ENCODE measurements at regions of chr10 and their contacts with region 1.

Region 1: DNA sequence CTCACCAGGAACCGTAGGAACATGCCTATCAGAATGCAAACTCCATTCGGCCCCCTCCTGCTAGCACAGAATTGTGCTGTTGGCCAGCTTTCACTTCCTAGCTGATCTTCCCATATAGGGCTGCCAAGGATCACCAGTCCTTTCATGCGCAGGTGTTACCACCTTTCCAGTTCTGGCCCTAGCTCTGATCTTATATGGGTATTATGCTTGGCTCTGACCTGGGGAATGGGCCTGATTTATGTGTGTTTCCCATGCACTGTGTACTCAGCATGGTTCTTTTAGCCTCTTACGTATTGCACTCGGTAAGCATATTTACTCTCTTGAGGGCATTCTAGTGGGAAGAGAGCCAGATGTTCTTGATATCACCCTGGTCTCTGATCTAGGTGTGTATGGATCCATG is 11.1 kb downstream of the SLC35G1 start:
- DNase-seq: no peak
- H3K4me3 ChIP-seq: no peak overlapping the region
- H3K4me3 Mint-ChIP-seq: no peak overlapping the region
- H3K27ac ChIP-seq: no peak overlapping the region
- H3K27ac Mint-ChIP-seq: peak overlapping the region in 1 of 7 donors; percentile 67
- H3K4me1 ChIP-seq: peaks cover 25% of the 10 kb centered on the region
- H3K4me1 Mint-ChIP-seq: peaks cover 17 to 31% (median 18%) of the 10 kb centered on the region in 4 donors
- H3K27me3 ChIP-seq: no peaks in the 10 kb centered on the region
- H3K27me3 Mint-ChIP-seq: no peaks in the 10 kb centered on the region

Region 2: DNA sequence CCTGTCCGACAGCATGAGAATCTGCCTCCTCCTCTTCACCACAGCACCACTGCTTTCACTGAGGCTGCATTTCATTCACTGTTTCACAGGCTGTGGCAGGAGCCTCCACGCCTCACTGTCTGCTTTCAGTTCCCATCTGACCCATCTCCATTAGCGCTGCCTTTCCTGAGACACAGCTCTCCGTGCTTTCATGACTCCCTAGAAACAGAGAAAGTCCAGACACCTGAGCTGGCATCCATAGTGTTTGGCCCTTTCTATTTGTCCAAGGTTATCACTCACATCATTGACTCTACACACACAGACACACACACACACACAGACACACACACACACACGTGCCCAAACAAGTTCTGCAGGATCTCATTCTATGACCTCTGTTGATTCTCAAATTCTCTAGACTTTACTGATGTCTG is 141.9 kb before region 1 on chr10:
- CTCF ChIA-PET with region 1: no interaction called
- POLR2A ChIA-PET with region 1: no interaction called
- intact Hi-C with region 1: no loop called
- DNase-seq: no peak
- H3K4me3 ChIP-seq: no peak overlapping the region
- H3K4me3 Mint-ChIP-seq: no peak overlapping the region
- H3K27ac ChIP-seq: no peak overlapping the region
- H3K27ac Mint-ChIP-seq: no peak overlapping the region
- H3K4me1 ChIP-seq: no peaks in the 10 kb centered on the region
- H3K4me1 Mint-ChIP-seq: peaks cover 2 to 5% (median 3%) of the 10 kb centered on the region in 4 donors
- H3K27me3 ChIP-seq: no peaks in the 10 kb centered on the region
- H3K27me3 Mint-ChIP-seq: peaks cover 22 to 27% of the 10 kb centered on the region in 2 donors

Region 3: GRCh38 chr10:93893646-93894515 is 11.0 kb before region 1 on chr10 and contains the start of gene SLC35G1:
- CTCF ChIA-PET with region 1: interaction called, 11 read pairs
- POLR2A ChIA-PET with region 1: interaction called, 26 read pairs
- intact Hi-C with region 1: no loop called
- DNase-seq: peak; percentile 48 to 72 (median 63)
- H3K4me3 ChIP-seq: peak within 1 kb of the TSS; percentile 50 to 68
- H3K4me3 Mint-ChIP-seq: peak within 1 kb of the TSS; percentile 85 to 92 (median 88)
- H3K27ac ChIP-seq: peak within 1 kb of the TSS; percentile 40
- H3K27ac Mint-ChIP-seq: peak within 1 kb of the TSS; percentile 66 to 83 (median 78)
- H3K4me1 ChIP-seq: peaks cover 26% of the 10 kb centered on the region
- H3K4me1 Mint-ChIP-seq: peaks cover 30 to 41% (median 32%) of the 10 kb centered on the region in 4 donors
- H3K27me3 ChIP-seq: no peaks in the 10 kb centered on the region
- H3K27me3 Mint-ChIP-seq: peaks cover 5% of the 10 kb centered on the region in 2 donors
- total RNA-seq, gene SLC35G1: 5.3 to 6.2 TPM